Posterior vena cava (tissue), 2 donors: ENCODE measurements at regions of chr2 and their contacts with region 1.

Region 1: GRCh38 chr2:190005513-190005912 is 57.0 kb downstream of the MSTN start:
- DNase-seq: no peak

Region 2: GRCh38 chr2:190050003-190050402 is 44.5 kb after region 1 on chr2:
- intact Hi-C with region 1: loop called in 1 of 2 experiments (anchors 1 kb)
- DNase-seq: no peak